ENCODE measurements at regions of chr2 and their contacts with region 1.

Region 1: GRCh38 chr2:142877216-142877756 is at the start of gene KYNU:
- DNase-seq: no peak
- H3K4me3 ChIP-seq: no peak within 1 kb of the TSS
- H3K27ac ChIP-seq: no peak within 1 kb of the TSS; the same call in 1 of the 2 replicates
- H3K4me1 ChIP-seq: peaks cover 43% of the 10 kb centered on the region
- H3K27me3 ChIP-seq: no peaks in the 10 kb centered on the region
- CTCF ChIP-seq: no peak
- total RNA-seq, gene KYNU: 44.5 and 55.7 TPM in 2 replicates

Region 2: GRCh38 chr2:142190805-142191204 is 686.5 kb before region 1 on chr2:
- CTCF ChIA-PET with region 1: no interaction called
- POLR2A ChIA-PET with region 1: no interaction called
- intact Hi-C with region 1: loop called (anchors 2 kb)
- DNase-seq: peak in 1 of 2 experiments; percentile 10
- H3K4me3 ChIP-seq: no peak overlapping the region
- H3K27ac ChIP-seq: no peak overlapping the region
- H3K4me1 ChIP-seq: peaks cover 5% of the 10 kb centered on the region; the same call in 1 of the 2 replicates
- H3K27me3 ChIP-seq: no peaks in the 10 kb centered on the region
- CTCF ChIP-seq: no peak

Region 3: DNA sequence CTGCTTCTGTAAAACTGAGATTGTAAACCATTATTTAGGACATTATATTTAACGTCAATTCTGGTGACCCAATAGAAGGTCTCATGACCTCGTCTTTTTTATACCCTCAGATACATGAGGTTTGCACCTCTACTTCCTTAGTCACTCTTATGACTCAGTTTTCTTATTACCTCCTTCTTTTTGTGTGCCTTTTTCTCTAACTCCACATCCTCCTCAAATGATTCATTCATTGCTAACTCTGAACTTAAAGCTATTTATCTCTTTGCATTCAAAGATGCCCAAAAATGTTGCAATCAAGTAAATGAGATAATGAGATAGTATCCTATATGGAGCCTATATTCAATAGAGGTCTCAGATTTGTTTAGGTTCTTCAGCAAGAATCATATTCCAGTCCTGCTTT is 120.9 kb before region 1 on chr2:
- CTCF ChIA-PET with region 1: interaction called, 10 read pairs
- POLR2A ChIA-PET with region 1: no interaction called
- intact Hi-C with region 1: no loop called
- DNase-seq: no peak
- H3K4me3 ChIP-seq: no peak overlapping the region
- H3K27ac ChIP-seq: no peak overlapping the region
- H3K4me1 ChIP-seq: peaks cover 16% of the 10 kb centered on the region; the same call in 1 of the 2 replicates
- H3K27me3 ChIP-seq: no peaks in the 10 kb centered on the region
- CTCF ChIP-seq: no peak

Region 4: GRCh38 chr2:142813830-142814829 is 63.2 kb before region 1 on chr2:
- CTCF ChIA-PET with region 1: no interaction called
- POLR2A ChIA-PET with region 1: no interaction called
- intact Hi-C with region 1: loop called (anchors 5 kb)
- DNase-seq: no peak
- H3K4me3 ChIP-seq: no peak overlapping the region
- H3K27ac ChIP-seq: no peak overlapping the region
- H3K4me1 ChIP-seq: no peaks in the 10 kb centered on the region
- H3K27me3 ChIP-seq: no peaks in the 10 kb centered on the region
- CTCF ChIP-seq: no peak

Region 5: GRCh38 chr2:142865924-142866323 is 11.4 kb before region 1 on chr2:
- CTCF ChIA-PET with region 1: no interaction called
- POLR2A ChIA-PET with region 1: no interaction called
- intact Hi-C with region 1: no loop called
- DNase-seq: no peak
- H3K4me3 ChIP-seq: no peak overlapping the region
- H3K27ac ChIP-seq: peak overlapping the region; percentile 59; the same call in 1 of the 2 replicates
- H3K4me1 ChIP-seq: peaks cover 25% of the 10 kb centered on the region
- H3K27me3 ChIP-seq: no peaks in the 10 kb centered on the region
- CTCF ChIP-seq: no peak

Region 6: GRCh38 chr2:142897807-142898206 is 20.5 kb after region 1 on chr2:
- CTCF ChIA-PET with region 1: no interaction called
- POLR2A ChIA-PET with region 1: no interaction called
- intact Hi-C with region 1: loop called (anchors 2 kb)
- DNase-seq: no peak
- H3K4me3 ChIP-seq: no peak overlapping the region
- H3K27ac ChIP-seq: no peak overlapping the region
- H3K4me1 ChIP-seq: peaks cover 14% of the 10 kb centered on the region
- H3K27me3 ChIP-seq: no peaks in the 10 kb centered on the region
- CTCF ChIP-seq: no peak

Region 7: DNA sequence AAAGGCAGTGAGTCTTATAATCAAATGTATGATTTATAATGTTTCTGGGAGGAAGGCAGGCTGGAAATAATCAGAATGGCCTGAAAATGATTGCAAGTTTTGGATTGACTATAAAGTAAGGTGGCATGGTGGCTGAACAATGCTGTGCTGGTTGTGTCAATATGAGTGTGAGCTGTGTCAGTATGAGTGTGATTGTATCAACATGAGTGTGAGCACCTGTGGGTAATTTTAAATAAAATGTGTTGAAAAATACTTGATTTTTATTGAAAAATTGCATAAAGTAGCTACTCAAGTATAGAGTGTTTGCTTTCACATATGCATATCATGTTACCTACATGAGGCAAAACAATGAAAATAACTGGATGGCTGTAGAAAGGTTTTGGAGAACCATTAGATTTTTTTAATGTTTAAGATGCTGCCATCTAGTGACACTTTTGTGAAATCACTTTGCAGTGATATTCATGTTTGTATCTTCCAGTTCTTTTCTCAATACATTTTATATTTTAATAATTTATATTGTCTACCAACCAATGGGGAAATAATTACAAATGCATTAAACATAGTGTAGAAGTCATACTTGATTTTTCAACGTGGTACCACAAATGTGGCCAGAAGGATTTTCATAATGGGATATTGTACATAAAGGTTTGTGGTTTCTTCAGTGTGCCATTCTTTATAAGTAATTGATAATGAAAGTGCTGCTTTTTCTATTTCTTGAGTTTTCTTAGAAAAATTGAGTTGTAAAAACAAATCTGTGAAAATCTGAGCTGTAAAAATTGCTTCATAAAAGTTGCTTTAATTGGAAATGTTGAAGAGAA is 103.5 kb after region 1 on chr2:
- CTCF ChIA-PET with region 1: interaction called, 5 read pairs
- POLR2A ChIA-PET with region 1: interaction called, 4 read pairs
- intact Hi-C with region 1: loop called (anchors 1 kb)
- DNase-seq: peak in 1 of 2 experiments; percentile 74
- H3K4me3 ChIP-seq: no peak overlapping the region
- H3K27ac ChIP-seq: peak overlapping the region; percentile 73
- H3K4me1 ChIP-seq: peaks cover 29% of the 10 kb centered on the region
- H3K27me3 ChIP-seq: no peaks in the 10 kb centered on the region
- CTCF ChIP-seq: peak; percentile 81

Measured in PC-9 (cell line).